CD4-positive, alpha-beta T cell (primary cell): ENCODE measurements at regions of chr4 and their contacts with region 1.

Region 1: GRCh38 chr4:166091912-166092510 is 219.0 kb downstream of the TLL1 start:
- DNase-seq: peak in 3 of 14 experiments; percentile 29 to 38 (median 32)
- ATAC-seq: no peak
- H3K4me3 ChIP-seq: no peak overlapping the region
- H3K4me3 Mint-ChIP-seq: no peak overlapping the region
- H3K27ac ChIP-seq: no peak overlapping the region
- H3K27ac Mint-ChIP-seq: no peak overlapping the region
- H3K4me1 ChIP-seq: no peaks in the 10 kb centered on the region
- H3K4me1 Mint-ChIP-seq: no peaks in the 10 kb centered on the region
- H3K27me3 ChIP-seq: no peaks in the 10 kb centered on the region
- H3K27me3 Mint-ChIP-seq: no peaks in the 10 kb centered on the region
- CTCF ChIP-seq: peak; percentile 59

Region 2: DNA sequence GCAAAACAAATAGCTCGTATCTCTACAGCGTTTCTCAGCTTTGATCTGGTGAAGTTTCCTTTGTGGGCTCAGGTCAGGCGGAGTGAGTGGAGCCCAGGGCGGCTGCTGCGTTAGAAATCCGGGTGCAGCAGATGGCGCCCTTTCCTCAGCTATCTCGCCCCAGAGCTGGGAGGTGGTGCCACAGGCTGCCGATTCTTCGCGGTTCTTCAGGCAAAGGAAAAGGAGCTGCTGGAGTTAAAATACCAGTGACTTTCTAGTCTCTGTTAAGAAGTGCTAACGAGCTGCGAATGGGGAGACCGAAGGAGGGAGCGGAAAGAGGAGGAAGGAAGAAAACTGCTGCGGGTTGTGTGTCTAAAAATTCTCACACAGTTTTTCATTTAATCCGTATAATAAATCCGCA is 598.7 kb before region 1 on chr4:
- CTCF ChIA-PET with region 1: no interaction called
- POLR2A ChIA-PET with region 1: no interaction called
- intact Hi-C with region 1: loop called (anchors 5 kb)
- DNase-seq: peak; percentile 39 to 74 (median 54)
- ATAC-seq: peak; percentile 80
- H3K4me3 ChIP-seq: no peak overlapping the region
- H3K4me3 Mint-ChIP-seq: no peak overlapping the region
- H3K27ac ChIP-seq: no peak overlapping the region
- H3K27ac Mint-ChIP-seq: no peak overlapping the region
- H3K4me1 ChIP-seq: peaks cover 6% of the 10 kb centered on the region
- H3K4me1 Mint-ChIP-seq: peaks cover 5% of the 10 kb centered on the region
- H3K27me3 ChIP-seq: peaks cover 0 to 6% of the 10 kb centered on the region in 2 experiments
- H3K27me3 Mint-ChIP-seq: peaks cover 39% of the 10 kb centered on the region
- CTCF ChIP-seq: peak; percentile 70

Region 3: GRCh38 chr4:165537028-165537648 is 554.9 kb before region 1 on chr4:
- CTCF ChIA-PET with region 1: no interaction called
- POLR2A ChIA-PET with region 1: no interaction called
- intact Hi-C with region 1: loop called (anchors 5 to 10 kb)
- DNase-seq: peak in 3 of 14 experiments; percentile 36 to 49 (median 43)
- ATAC-seq: no peak
- H3K4me3 ChIP-seq: no peak overlapping the region
- H3K4me3 Mint-ChIP-seq: no peak overlapping the region
- H3K27ac ChIP-seq: no peak overlapping the region
- H3K27ac Mint-ChIP-seq: no peak overlapping the region
- H3K4me1 ChIP-seq: no peaks in the 10 kb centered on the region
- H3K4me1 Mint-ChIP-seq: no peaks in the 10 kb centered on the region
- H3K27me3 ChIP-seq: no peaks in the 10 kb centered on the region
- H3K27me3 Mint-ChIP-seq: peaks cover 31% of the 10 kb centered on the region
- CTCF ChIP-seq: peak; percentile 95